Naive thymus-derived CD4-positive, alpha-beta T cell (primary cell): ENCODE measurements at regions of chr17 and their contacts with region 1.

Region 1: DNA sequence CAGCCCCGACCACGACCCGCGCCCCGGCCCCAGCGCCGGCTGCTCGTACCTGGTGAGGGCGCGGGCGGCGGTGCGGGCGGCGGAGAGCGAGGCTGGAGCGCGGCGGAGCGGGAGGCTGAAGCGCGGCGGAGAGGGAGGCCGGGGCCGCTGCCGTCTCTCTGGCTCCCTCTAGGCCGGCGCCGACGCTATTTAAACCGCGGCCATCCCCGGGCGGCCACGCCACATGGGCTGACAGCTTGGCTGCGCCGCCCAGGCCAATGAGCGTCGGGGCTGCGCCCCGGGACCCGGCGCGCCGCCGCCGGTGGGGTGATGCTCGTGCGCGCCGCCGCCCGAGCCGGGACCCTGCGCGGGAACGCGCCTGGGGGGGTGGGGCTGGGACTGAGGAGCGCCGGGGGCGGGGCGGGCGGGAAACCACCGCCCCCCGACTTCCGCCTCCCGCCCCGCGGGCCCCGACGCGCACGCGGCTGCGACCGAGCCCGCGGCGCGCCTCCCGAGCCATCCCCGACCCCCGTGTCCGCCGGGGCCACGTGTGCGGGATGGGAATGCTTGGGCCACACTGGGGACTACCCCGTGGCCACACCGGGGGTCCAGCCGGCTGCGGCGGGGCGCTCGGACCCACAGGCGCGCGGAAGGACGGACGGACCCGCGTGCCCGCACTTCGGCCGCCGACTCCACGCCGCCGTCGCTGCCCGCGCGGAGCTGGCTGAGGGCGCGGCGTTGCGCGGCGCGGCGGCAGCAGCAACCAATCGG is at the start of gene FASN:
- DNase-seq: peak; percentile 84 to 93 (median 90)
- ATAC-seq: peak; percentile 87
- H3K4me3 ChIP-seq: peak within 1 kb of the TSS; percentile 61
- H3K4me3 Mint-ChIP-seq: peak within 1 kb of the TSS in 9 of 10 donors; percentile 36 to 84 (median 69)
- H3K27ac ChIP-seq: peak within 1 kb of the TSS; percentile 97
- H3K27ac Mint-ChIP-seq: peak within 1 kb of the TSS in 4 of 9 donors; percentile 63 to 80 (median 72)
- H3K4me1 ChIP-seq: peaks cover 4 to 12% of the 10 kb centered on the region in 2 donors
- H3K4me1 Mint-ChIP-seq: peaks cover 0 to 14% (median 7%) of the 10 kb centered on the region in 7 donors
- H3K27me3 ChIP-seq: no peaks in the 10 kb centered on the region
- H3K27me3 Mint-ChIP-seq: no peaks in the 10 kb centered on the region
- total RNA-seq, gene FASN: 24.3 to 168 (median 59.0) TPM

Region 2: DNA sequence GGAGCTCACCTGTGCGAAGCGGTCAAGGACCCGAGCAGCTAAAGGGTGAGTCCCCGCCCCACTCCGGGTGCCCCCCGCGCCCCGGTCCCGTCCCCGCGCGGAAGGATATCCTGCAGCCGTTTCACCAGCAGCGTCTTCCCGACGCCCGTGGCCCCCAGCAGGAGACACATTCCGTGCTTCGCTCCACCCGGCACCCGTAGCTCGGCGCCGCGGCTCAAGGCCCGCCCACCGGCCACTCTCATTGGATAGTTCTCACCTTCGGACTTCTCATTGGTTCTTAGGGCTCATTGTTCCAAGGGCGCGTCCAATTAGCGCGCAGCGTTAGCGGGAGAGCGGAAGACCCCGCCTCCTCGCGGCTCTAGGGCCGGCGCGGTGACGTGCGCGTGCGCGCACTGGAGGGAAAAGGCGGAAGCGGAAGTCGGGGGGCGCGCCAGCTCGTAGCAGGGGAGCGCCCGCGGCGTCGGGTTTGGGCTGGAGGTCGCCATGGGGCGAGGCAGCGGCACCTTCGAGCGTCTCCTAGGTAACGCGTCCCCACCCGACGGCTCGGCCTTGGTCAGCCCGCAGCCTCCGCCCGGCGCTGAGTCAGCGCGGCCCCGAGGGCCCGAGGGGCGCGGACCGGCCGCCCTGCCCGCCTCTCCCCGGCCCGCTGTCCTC is 414.5 kb before region 1 on chr17 and contains the starts of genes ARL16 and HGS:
- CTCF ChIA-PET with region 1: no interaction called
- POLR2A ChIA-PET with region 1: no interaction called
- intact Hi-C with region 1: loop called in 1 of 2 experiments (anchors 5 kb)
- DNase-seq: peak; percentile 91 to 98 (median 97)
- ATAC-seq: peak; percentile 98
- H3K4me3 ChIP-seq: peak within 1 kb of the TSS; percentile 76
- H3K4me3 Mint-ChIP-seq: peak within 1 kb of the TSS; percentile 88 to 99 (median 96)
- H3K27ac ChIP-seq: peak within 1 kb of the TSS; percentile 84
- H3K27ac Mint-ChIP-seq: peak within 1 kb of the TSS; percentile 83 to 97 (median 95)
- H3K4me1 ChIP-seq: peaks cover 22 to 24% of the 10 kb centered on the region in 2 donors
- H3K4me1 Mint-ChIP-seq: peaks cover 22 to 49% (median 40%) of the 10 kb centered on the region in 7 donors
- H3K27me3 ChIP-seq: no peaks in the 10 kb centered on the region
- H3K27me3 Mint-ChIP-seq: peaks cover 0 to 3% (median 0%) of the 10 kb centered on the region in 5 donors
- total RNA-seq, gene ARL16: 12.0 to 30.6 (median 30.1) TPM
- total RNA-seq, gene HGS: 108 to 174 (median 153) TPM

Region 3: GRCh38 chr17:82030470-82031302 is 67.6 kb before region 1 on chr17:
- CTCF ChIA-PET with region 1: interaction called, 3 read pairs
- POLR2A ChIA-PET with region 1: interaction called, 5 read pairs
- intact Hi-C with region 1: loop called (anchors 1 to 10 kb)
- DNase-seq: peak; percentile 73 to 92 (median 86)
- ATAC-seq: peak; percentile 94
- H3K4me3 ChIP-seq: peak overlapping the region; percentile 60
- H3K4me3 Mint-ChIP-seq: peak overlapping the region; percentile 77 to 91 (median 86)
- H3K27ac ChIP-seq: peak overlapping the region; percentile 48
- H3K27ac Mint-ChIP-seq: peak overlapping the region in 6 of 9 donors; percentile 36 to 85 (median 65)
- H3K4me1 ChIP-seq: peaks cover 7 to 12% of the 10 kb centered on the region in 2 donors
- H3K4me1 Mint-ChIP-seq: peaks cover 10 to 16% (median 16%) of the 10 kb centered on the region in 7 donors
- H3K27me3 ChIP-seq: no peaks in the 10 kb centered on the region
- H3K27me3 Mint-ChIP-seq: no peaks in the 10 kb centered on the region

Region 4: DNA sequence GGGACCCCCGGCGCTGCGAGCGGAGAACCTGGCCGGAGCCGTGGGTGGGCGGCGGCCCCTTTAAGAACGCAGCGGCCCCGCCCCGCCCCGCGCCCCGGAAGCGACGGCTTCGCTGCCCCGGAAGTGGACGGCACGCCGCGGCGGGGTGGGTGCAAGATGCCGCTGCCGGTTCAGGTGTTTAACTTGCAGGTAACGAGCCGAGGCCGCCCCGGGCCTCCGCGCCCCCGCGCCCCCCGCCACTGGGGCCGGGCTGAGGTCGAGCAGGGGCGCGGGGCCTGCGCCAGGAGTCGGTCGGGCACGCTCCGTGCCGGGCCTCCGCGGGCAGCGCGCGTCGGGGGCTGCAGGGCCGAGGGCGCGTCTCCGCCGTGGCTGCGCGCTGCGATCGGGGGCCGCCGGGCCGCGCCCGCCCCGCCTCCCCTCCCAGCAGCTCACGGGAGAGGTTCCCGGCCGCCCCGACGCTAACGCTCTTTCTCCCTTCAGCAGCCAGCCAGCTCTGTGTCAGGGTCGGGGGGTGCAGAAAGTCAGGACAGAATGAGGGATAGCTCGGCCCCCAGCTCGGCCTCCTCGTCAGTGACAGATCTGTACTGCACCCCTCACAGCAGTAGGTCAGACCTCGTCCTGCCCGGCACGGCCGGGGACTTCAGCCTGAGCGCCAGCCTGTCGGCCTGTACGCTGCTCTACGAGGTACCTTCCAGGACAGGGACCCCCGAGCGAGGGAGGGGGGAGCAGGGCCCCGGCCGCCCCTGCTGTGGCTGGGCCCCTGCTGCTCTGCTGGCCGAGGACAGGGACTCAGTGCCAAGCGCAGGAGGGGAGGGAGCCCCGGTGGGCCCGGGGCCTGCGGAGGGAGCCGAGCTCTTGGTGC is 46.2 kb before region 1 on chr17 and contains the starts of genes GPS1 and RFNG:
- CTCF ChIA-PET with region 1: no interaction called
- POLR2A ChIA-PET with region 1: interaction called, 5 read pairs
- intact Hi-C with region 1: loop called in 1 of 2 experiments (anchors 1 kb)
- DNase-seq: peak; percentile 68 to 87 (median 80)
- ATAC-seq: peak; percentile 91
- H3K4me3 ChIP-seq: peak within 1 kb of the TSS; percentile 74
- H3K4me3 Mint-ChIP-seq: peak within 1 kb of the TSS; percentile 60 to 92 (median 86)
- H3K27ac ChIP-seq: peak within 1 kb of the TSS; percentile 72
- H3K27ac Mint-ChIP-seq: peak within 1 kb of the TSS in 8 of 9 donors; percentile 51 to 91 (median 78)
- H3K4me1 ChIP-seq: peaks cover 18 to 31% of the 10 kb centered on the region in 2 donors
- H3K4me1 Mint-ChIP-seq: peaks cover 5 to 28% (median 13%) of the 10 kb centered on the region in 7 donors
- H3K27me3 ChIP-seq: no peaks in the 10 kb centered on the region
- H3K27me3 Mint-ChIP-seq: no peaks in the 10 kb centered on the region
- total RNA-seq, gene GPS1: 68.3 to 88.1 (median 71.7) TPM
- total RNA-seq, gene RFNG: 25.0 to 45.5 (median 31.5) TPM

Region 5: GRCh38 chr17:82120148-82120547 is 21.9 kb after region 1 on chr17:
- CTCF ChIA-PET with region 1: no interaction called
- POLR2A ChIA-PET with region 1: interaction called, 13 read pairs
- intact Hi-C with region 1: no loop called
- DNase-seq: peak in 7 of 9 donors; percentile 55 to 85 (median 76)
- ATAC-seq: peak; percentile 91
- H3K4me3 ChIP-seq: no peak overlapping the region
- H3K4me3 Mint-ChIP-seq: peak overlapping the region; percentile 8 to 79 (median 67)
- H3K27ac ChIP-seq: peak overlapping the region; percentile 66
- H3K27ac Mint-ChIP-seq: peak overlapping the region; percentile 60 to 100 (median 95)
- H3K4me1 ChIP-seq: peaks cover 1 to 57% of the 10 kb centered on the region in 2 donors
- H3K4me1 Mint-ChIP-seq: peaks cover 25 to 69% (median 64%) of the 10 kb centered on the region in 7 donors
- H3K27me3 ChIP-seq: no peaks in the 10 kb centered on the region
- H3K27me3 Mint-ChIP-seq: no peaks in the 10 kb centered on the region

Region 6: GRCh38 chr17:82153745-82154375 is 55.6 kb after region 1 on chr17:
- CTCF ChIA-PET with region 1: no interaction called
- POLR2A ChIA-PET with region 1: interaction called, 3 read pairs
- intact Hi-C with region 1: loop called in 1 of 2 experiments (anchors 1 kb)
- DNase-seq: peak; percentile 76 to 91 (median 82)
- ATAC-seq: peak; percentile 99
- H3K4me3 ChIP-seq: no peak overlapping the region
- H3K4me3 Mint-ChIP-seq: no peak overlapping the region
- H3K27ac ChIP-seq: no peak overlapping the region
- H3K27ac Mint-ChIP-seq: peak overlapping the region in 7 of 9 donors; percentile 23 to 97 (median 87)
- H3K4me1 ChIP-seq: peaks cover 0 to 10% of the 10 kb centered on the region in 2 donors
- H3K4me1 Mint-ChIP-seq: peaks cover 5 to 20% (median 10%) of the 10 kb centered on the region in 7 donors
- H3K27me3 ChIP-seq: no peaks in the 10 kb centered on the region
- H3K27me3 Mint-ChIP-seq: no peaks in the 10 kb centered on the region

Region 7: GRCh38 chr17:82964851-82965341 is 866.6 kb after region 1 on chr17:
- CTCF ChIA-PET with region 1: no interaction called
- POLR2A ChIA-PET with region 1: no interaction called
- intact Hi-C with region 1: no loop called
- DNase-seq: no peak
- ATAC-seq: no peak
- H3K4me3 ChIP-seq: no peak overlapping the region
- H3K4me3 Mint-ChIP-seq: no peak overlapping the region
- H3K27ac ChIP-seq: no peak overlapping the region
- H3K27ac Mint-ChIP-seq: no peak overlapping the region
- H3K4me1 ChIP-seq: peaks cover 0 to 7% of the 10 kb centered on the region in 2 donors
- H3K4me1 Mint-ChIP-seq: peaks cover 6 to 12% (median 7%) of the 10 kb centered on the region in 7 donors
- H3K27me3 ChIP-seq: no peaks in the 10 kb centered on the region
- H3K27me3 Mint-ChIP-seq: no peaks in the 10 kb centered on the region